AG04450 (cell line): ENCODE measurements at regions of chr2 and their contacts with region 1.

Region 1: GRCh38 chr2:230068016-230068650 is 591 bp downstream of the SLC16A14 start:
- DNase-seq: no peak
- H3K4me3 ChIP-seq: peak overlapping the region; percentile 60
- H3K27ac ChIP-seq: no peak overlapping the region
- H3K27me3 ChIP-seq: peaks cover 11% of the 10 kb centered on the region
- CTCF ChIP-seq: 0 out of 2 replicates have a peak, but pooled peaks have one; percentile 4

Region 2: GRCh38 chr2:230007931-230008707 is 60.0 kb before region 1 on chr2:
- CTCF ChIA-PET with region 1: interaction called, 37 read pairs
- POLR2A ChIA-PET with region 1: no interaction called
- DNase-seq: peak; percentile 51
- H3K4me3 ChIP-seq: no peak overlapping the region
- H3K27ac ChIP-seq: no peak overlapping the region
- H3K27me3 ChIP-seq: no peaks in the 10 kb centered on the region
- CTCF ChIP-seq: peak; percentile 87

Region 3: GRCh38 chr2:230053753-230054478 is 14.2 kb before region 1 on chr2:
- CTCF ChIA-PET with region 1: interaction called, 71 read pairs
- POLR2A ChIA-PET with region 1: no interaction called
- DNase-seq: no peak
- H3K4me3 ChIP-seq: no peak overlapping the region
- H3K27ac ChIP-seq: no peak overlapping the region
- H3K27me3 ChIP-seq: no peaks in the 10 kb centered on the region
- CTCF ChIP-seq: no peak

Region 4: DNA sequence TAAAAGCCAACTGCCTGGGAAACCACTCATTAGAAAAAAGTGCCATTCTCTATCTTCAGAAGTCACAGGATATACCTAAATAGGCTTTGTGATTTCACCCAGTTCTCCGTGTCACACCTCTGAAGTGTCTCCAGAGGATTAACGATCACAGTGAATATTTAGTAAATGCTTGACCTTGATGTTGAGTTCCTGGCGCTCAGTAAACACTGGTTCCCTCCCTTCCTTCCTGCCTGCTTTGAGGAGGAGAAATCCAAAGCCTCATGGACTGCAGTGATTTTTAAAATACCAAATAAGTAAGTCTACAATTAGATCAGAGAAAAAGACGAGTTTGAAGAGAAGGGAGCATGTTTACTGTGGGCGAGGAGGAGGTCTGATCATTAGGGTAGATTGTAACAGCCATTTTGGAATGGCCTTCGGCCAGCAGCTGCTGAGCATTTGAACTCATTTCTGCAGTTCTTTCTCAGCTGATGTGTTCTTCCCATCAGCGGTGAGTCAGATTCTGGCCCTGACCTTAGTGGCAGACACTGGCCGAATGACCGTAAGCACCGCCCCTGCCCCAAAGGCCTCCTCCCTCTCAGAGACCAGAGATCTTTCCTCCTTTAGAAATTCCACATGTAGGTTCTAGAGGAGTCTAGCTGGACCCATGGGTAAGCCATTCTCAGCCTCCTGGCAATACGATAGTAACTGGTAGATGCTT is 62.7 kb after region 1 on chr2:
- CTCF ChIA-PET with region 1: interaction called, 18 read pairs
- POLR2A ChIA-PET with region 1: no interaction called
- DNase-seq: peak; percentile 81
- H3K4me3 ChIP-seq: no peak overlapping the region
- H3K27ac ChIP-seq: peak overlapping the region; percentile 87
- H3K27me3 ChIP-seq: no peaks in the 10 kb centered on the region
- CTCF ChIP-seq: no peak

Region 5: GRCh38 chr2:230170532-230170931 is 102.4 kb after region 1 on chr2:
- CTCF ChIA-PET with region 1: interaction called, 11 read pairs
- POLR2A ChIA-PET with region 1: no interaction called
- DNase-seq: no peak
- H3K4me3 ChIP-seq: no peak overlapping the region
- H3K27ac ChIP-seq: no peak overlapping the region
- H3K27me3 ChIP-seq: no peaks in the 10 kb centered on the region
- CTCF ChIP-seq: no peak

Region 6: DNA sequence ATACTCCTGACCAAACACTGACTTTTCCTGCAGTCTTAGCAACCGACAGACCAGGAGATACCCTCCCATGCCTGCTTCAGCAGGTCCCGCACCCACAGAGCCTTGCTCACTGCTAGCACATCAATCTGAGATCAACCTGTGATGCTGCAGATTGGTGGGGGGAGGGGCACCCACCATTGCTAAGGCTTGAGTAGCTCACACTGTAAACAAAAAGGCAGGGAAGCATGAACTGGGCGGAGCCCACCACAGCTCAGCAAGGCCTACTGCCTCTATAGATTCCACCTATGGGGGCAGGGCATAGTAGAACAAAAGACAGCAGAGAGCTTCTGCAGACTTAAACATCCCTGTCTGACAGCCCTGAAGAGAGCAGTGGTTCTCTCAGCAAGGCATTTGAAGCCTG is 457.5 kb after region 1 on chr2:
- CTCF ChIA-PET with region 1: no interaction called
- POLR2A ChIA-PET with region 1: no interaction called
- DNase-seq: no peak
- H3K4me3 ChIP-seq: no peak overlapping the region
- H3K27ac ChIP-seq: no peak overlapping the region
- H3K27me3 ChIP-seq: no peaks in the 10 kb centered on the region
- CTCF ChIP-seq: no peak

Region 7: DNA sequence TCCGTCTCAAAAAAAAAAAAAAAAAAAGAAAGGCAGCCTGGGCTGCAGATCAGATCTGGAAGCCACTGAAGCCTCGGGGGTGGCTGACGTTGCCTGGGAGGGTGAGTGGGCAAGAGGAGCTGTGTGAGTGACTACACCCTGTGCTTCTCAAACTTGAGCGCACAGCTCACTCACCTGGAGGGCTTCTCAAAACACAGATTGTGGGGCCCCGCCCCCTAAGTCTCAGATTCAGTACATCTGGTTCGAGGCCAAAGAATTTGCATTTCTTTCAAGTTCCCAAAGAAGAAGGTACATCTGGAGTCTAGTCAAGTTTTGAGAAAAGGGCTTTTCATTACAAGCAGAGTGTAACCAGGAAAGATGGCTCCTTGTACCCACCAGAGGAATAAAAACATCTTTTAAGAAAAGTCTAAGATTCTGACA is 546.8 kb after region 1 on chr2:
- CTCF ChIA-PET with region 1: interaction called, 10 read pairs
- POLR2A ChIA-PET with region 1: no interaction called
- DNase-seq: no peak
- H3K4me3 ChIP-seq: no peak overlapping the region
- H3K27ac ChIP-seq: no peak overlapping the region
- H3K27me3 ChIP-seq: no peaks in the 10 kb centered on the region
- CTCF ChIP-seq: no peak